ENCODE measurements at regions of chrX and their contacts with region 1.

Region 1: DNA sequence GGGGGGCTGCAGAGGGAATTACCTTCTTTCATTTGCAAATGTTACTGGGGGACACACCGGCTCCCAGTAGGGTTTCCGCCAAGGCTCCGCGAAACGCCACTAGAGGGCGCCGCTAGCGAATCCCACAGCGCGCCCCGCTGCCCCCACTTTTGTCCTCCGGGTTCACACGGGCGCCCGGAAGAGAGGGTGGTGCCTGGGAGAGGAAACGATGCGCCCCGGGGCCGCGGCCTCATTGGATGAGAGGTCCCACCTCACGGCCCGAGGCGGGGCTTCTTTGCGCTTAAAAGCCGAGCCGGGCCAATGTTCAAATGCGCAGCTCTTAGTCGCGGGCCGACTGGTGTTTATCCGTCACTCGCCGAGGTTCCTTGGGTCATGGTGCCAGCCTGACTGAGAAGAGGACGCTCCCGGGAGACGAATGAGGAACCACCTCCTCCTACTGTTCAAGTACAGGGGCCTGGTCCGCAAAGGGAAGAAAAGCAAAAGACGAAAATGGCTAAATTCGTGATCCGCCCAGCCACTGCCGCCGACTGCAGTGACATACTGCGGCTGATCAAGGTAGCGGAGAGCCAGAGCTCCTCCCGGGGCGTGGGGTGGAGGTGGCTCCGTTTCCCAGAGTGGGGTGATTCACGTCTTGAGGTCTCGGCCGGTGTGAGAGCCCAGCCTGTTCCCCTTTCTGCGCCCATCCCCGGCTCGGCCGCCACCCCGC is at the start of gene SAT1:
- DNase-seq: peak; percentile 96
- ATAC-seq: peak; percentile 88
- H3K4me3 Mint-ChIP-seq: peak within 1 kb of the TSS; percentile 86
- H3K27ac Mint-ChIP-seq: peak within 1 kb of the TSS; percentile 98
- H3K4me1 Mint-ChIP-seq: peaks cover 34% of the 10 kb centered on the region
- H3K27me3 Mint-ChIP-seq: no peaks in the 10 kb centered on the region
- total RNA-seq, gene SAT1: 83.4 to 87.5 TPM

Region 2: DNA sequence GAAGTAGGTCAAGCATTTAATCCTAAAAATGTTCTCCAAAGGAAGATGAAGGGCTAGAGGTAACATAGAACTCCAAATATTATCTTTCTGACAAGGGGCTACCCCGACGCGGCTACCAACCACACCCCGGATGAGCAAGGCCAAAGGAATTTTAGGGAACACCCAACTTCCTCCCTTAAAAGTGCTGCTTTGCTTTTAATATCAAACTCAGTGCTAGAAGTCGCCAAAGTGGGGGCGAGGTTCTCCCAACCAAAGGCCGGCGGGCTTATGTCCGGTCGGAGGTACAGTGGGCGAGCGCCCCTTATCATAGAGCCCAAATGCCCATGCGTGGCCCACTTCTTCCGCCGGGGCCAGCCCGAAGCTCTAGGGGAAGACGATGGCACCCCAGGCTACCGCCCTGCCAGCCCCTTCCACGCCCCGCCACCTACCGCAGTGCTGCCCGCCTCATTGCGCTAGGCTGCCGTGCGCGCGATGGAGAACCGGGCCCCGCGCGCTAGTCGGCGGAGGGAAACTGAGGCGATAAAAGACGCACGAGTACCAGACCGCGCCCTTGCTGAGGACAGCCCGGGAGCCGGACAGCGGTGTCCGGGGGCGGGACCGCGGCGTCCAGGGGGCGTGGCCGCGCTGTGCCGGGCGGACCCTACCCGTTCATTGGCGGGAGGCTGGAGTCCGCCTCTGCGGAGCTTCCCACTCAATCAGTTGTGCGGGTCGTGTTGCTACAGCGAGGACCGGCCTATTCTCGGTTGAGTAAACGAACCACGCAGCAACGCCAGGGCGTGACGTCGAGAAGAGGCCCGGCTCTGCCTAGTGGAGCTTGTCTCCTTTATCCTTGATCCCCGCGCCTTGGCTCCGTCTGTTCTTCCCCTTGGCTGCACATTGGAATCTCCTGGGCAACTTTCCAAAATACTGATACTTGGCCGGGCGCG is 40.1 kb before region 1 on chrX and contains the start of gene ACOT9:
- CTCF ChIA-PET with region 1: interaction called, 15 read pairs
- POLR2A ChIA-PET with region 1: interaction called, 12 read pairs
- DNase-seq: peak; percentile 81
- ATAC-seq: peak; percentile 98
- H3K4me3 Mint-ChIP-seq: peak within 1 kb of the TSS; percentile 76
- H3K27ac Mint-ChIP-seq: peak within 1 kb of the TSS; percentile 89
- H3K4me1 Mint-ChIP-seq: peaks cover 32% of the 10 kb centered on the region
- H3K27me3 Mint-ChIP-seq: no peaks in the 10 kb centered on the region
- total RNA-seq, gene ACOT9: 23.5 to 29.0 TPM

Region 3: GRCh38 chrX:23766650-23767551 is 16.1 kb before region 1 on chrX:
- CTCF ChIA-PET with region 1: no interaction called
- POLR2A ChIA-PET with region 1: interaction called, 19 read pairs
- DNase-seq: no peak
- ATAC-seq: peak; percentile 65
- H3K4me3 Mint-ChIP-seq: peak overlapping the region; percentile 46
- H3K27ac Mint-ChIP-seq: peak overlapping the region; percentile 60
- H3K4me1 Mint-ChIP-seq: peaks cover 8% of the 10 kb centered on the region
- H3K27me3 Mint-ChIP-seq: no peaks in the 10 kb centered on the region

Region 4: GRCh38 chrX:23907498-23908218 is 124.6 kb after region 1 on chrX and contains the starts of genes APOO and CXorf58:
- CTCF ChIA-PET with region 1: interaction called, 106 read pairs
- POLR2A ChIA-PET with region 1: interaction called, 61 read pairs
- DNase-seq: peak; percentile 92
- ATAC-seq: peak; percentile 97
- H3K4me3 Mint-ChIP-seq: peak within 1 kb of the TSS; percentile 75
- H3K27ac Mint-ChIP-seq: peak within 1 kb of the TSS; percentile 88
- H3K4me1 Mint-ChIP-seq: peaks cover 19% of the 10 kb centered on the region
- H3K27me3 Mint-ChIP-seq: no peaks in the 10 kb centered on the region
- total RNA-seq, gene APOO: 28.3 to 33.1 TPM
- total RNA-seq, gene CXorf58: 0.21 to 0.31 TPM

Region 5: GRCh38 chrX:23945206-23945605 is 162.2 kb after region 1 on chrX:
- CTCF ChIA-PET with region 1: no interaction called
- POLR2A ChIA-PET with region 1: no interaction called
- DNase-seq: no peak
- ATAC-seq: no peak
- H3K4me3 Mint-ChIP-seq: no peak overlapping the region
- H3K27ac Mint-ChIP-seq: no peak overlapping the region
- H3K4me1 Mint-ChIP-seq: peaks cover 6% of the 10 kb centered on the region
- H3K27me3 Mint-ChIP-seq: no peaks in the 10 kb centered on the region

Region 6: DNA sequence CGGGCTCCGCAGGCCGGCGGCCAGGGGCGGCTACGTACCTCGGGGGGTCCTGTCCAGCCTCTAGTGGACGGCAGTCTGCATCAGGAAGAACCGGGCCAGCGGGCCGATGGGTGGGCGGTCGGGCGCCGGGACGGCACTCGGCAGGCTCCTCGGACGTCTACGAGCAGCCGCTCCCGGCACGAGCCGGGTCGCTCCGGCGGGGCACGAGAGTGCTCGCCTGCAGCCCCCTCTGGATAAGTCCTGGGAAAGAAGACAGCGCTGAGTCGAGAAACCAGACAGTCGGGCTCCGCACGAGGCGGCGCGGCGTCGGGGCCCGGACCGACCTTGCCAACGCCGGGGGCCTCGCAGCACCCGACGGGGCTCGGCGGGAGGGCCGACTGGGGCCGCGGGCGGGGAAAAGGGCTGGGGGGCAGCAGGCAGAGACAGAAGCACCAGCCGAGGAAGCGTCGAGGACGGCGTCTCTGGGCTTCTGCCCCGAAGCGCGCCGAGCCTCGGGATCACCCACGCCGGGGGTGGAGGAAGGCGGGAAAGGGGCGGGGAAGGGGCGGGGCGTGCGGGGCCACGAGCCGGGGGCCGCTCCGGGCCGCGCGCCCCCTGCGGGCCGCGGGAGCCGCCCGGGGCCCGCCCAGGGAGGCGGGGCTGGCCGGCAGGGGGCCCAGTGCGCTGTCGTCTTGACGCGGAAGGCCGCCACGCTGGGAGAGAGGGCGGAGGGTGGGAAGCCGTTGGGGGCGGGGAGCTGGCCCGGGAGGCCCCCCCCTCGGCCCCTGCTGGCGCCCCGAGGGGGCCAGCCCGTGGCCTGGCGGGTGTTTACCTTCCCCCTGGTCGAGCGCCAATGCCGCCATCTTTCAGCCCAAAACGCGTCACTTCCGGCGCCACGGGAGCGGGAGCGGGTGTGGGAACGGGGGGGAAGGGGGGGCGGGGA is 242.1 kb after region 1 on chrX:
- CTCF ChIA-PET with region 1: no interaction called
- POLR2A ChIA-PET with region 1: interaction called, 15 read pairs
- DNase-seq: peak; percentile 89
- ATAC-seq: peak; percentile 91
- H3K4me3 Mint-ChIP-seq: peak overlapping the region; percentile 89
- H3K27ac Mint-ChIP-seq: peak overlapping the region; percentile 86
- H3K4me1 Mint-ChIP-seq: peaks cover 27% of the 10 kb centered on the region
- H3K27me3 Mint-ChIP-seq: no peaks in the 10 kb centered on the region

Region 7: GRCh38 chrX:24054182-24055042 is 271.4 kb after region 1 on chrX and contains the start of gene EIF2S3:
- CTCF ChIA-PET with region 1: interaction called, 14 read pairs
- POLR2A ChIA-PET with region 1: interaction called, 23 read pairs
- DNase-seq: peak; percentile 91
- ATAC-seq: peak; percentile 89
- H3K4me3 Mint-ChIP-seq: no peak within 1 kb of the TSS
- H3K27ac Mint-ChIP-seq: peak within 1 kb of the TSS; percentile 100
- H3K4me1 Mint-ChIP-seq: peaks cover 6% of the 10 kb centered on the region
- H3K27me3 Mint-ChIP-seq: no peaks in the 10 kb centered on the region
- total RNA-seq, gene EIF2S3: 187 to 197 TPM